ENCODE measurements at regions of chr13 and their contacts with region 1.

Region 1: GRCh38 chr13:48094781-48095502 is at the start of gene MED4:
- DNase-seq: peak; percentile 98
- H3K4me3 Mint-ChIP-seq: peak within 1 kb of the TSS; percentile 97
- H3K27ac Mint-ChIP-seq: peak within 1 kb of the TSS; percentile 86
- H3K4me1 Mint-ChIP-seq: peaks cover 38% of the 10 kb centered on the region
- H3K27me3 Mint-ChIP-seq: peaks cover 1% of the 10 kb centered on the region
- total RNA-seq, gene MED4: 49.3 to 53.0 TPM

Region 2: DNA sequence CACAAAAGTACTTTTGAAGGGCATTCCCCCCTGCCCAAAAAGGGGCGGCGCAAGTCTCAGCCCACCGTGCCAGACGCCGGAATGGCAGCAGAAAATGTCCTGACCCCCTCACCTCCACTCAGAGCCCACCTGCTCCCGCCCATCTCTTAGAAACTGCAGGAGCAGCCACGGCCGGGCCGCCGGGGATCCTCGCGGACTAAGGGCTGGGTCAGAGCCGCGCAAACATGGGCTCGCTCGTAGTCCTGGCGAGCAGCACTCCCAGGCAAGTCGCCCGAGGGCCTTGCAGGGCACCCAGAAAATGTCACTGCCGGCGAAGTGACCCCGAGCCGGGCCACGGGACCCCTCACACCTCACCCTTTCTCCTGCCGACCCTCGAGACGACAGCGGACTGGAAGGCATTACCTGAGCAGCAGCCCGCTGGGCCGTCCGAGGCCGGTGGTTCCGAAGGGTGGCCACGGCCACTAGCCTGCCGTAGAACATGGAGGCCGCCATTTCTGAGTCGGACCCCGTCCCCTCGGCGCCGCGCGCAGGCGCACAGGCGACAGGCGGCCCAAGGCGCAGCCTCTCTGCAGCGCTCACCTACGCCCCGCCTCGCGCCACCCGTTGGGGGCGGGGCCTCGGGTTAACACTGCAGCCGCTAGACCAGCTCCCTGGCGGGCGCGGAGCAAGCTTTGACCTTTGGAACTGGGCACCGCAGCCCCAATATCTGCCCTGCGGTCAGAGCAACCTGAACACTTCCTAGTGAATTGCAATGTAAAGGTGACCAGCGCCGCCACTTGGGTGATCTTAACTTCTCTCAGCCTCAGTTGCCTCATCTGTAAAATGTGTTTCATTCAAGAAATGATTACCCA is 93.9 kb before region 1 on chr13 and contains the start of gene SUCLA2:
- CTCF ChIA-PET with region 1: no interaction called
- POLR2A ChIA-PET with region 1: no interaction called
- intact Hi-C with region 1: loop called (anchors 1 kb)
- DNase-seq: peak; percentile 93
- H3K4me3 Mint-ChIP-seq: peak within 1 kb of the TSS; percentile 93
- H3K27ac Mint-ChIP-seq: peak within 1 kb of the TSS; percentile 69
- H3K4me1 Mint-ChIP-seq: peaks cover 29% of the 10 kb centered on the region
- H3K27me3 Mint-ChIP-seq: no peaks in the 10 kb centered on the region
- total RNA-seq, gene SUCLA2: 39.2 to 41.3 TPM

Region 3: DNA sequence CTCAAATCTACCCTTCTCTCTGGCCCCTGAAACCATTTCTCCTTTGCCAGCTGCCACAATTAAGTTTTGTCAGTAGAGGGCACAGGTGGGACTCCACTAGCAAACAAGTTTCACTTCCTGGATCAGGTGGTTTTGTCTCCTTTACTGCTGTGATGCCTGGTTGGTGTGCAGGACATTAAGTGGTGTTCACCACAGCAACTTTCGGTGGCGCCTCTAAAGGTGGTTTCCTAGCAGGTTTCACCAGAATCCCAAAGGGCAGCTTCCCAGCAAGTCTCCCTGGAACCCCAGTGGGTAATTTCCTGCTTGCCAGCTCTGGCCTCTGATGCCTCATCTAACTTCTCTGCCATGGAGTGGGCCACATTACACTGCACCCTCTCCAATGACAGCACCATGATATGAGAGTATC is 16.7 kb before region 1 on chr13:
- CTCF ChIA-PET with region 1: interaction called, 14 read pairs
- POLR2A ChIA-PET with region 1: interaction called, 5 read pairs
- intact Hi-C with region 1: no loop called
- DNase-seq: peak; percentile 33
- H3K4me3 Mint-ChIP-seq: no peak overlapping the region
- H3K27ac Mint-ChIP-seq: no peak overlapping the region
- H3K4me1 Mint-ChIP-seq: peaks cover 3% of the 10 kb centered on the region
- H3K27me3 Mint-ChIP-seq: no peaks in the 10 kb centered on the region

Region 4: GRCh38 chr13:48303359-48304142 is 208.6 kb after region 1 on chr13 and contains the start of gene RB1:
- CTCF ChIA-PET with region 1: interaction called, 8 read pairs
- POLR2A ChIA-PET with region 1: interaction called, 4 read pairs
- intact Hi-C with region 1: loop called (anchors 1 kb)
- DNase-seq: peak; percentile 94
- H3K4me3 Mint-ChIP-seq: peak within 1 kb of the TSS; percentile 97
- H3K27ac Mint-ChIP-seq: peak within 1 kb of the TSS; percentile 93
- H3K4me1 Mint-ChIP-seq: peaks cover 27% of the 10 kb centered on the region
- H3K27me3 Mint-ChIP-seq: no peaks in the 10 kb centered on the region
- total RNA-seq, gene RB1: 26.5 to 28.8 TPM

Region 5: GRCh38 chr13:48653472-48653939 is 558.6 kb after region 1 on chr13 and contains the start of gene CYSLTR2:
- CTCF ChIA-PET with region 1: no interaction called
- POLR2A ChIA-PET with region 1: no interaction called
- intact Hi-C with region 1: loop called (anchors 5 kb)
- DNase-seq: peak; percentile 16
- H3K4me3 Mint-ChIP-seq: peak within 1 kb of the TSS; percentile 75
- H3K27ac Mint-ChIP-seq: peak within 1 kb of the TSS; percentile 81
- H3K4me1 Mint-ChIP-seq: peaks cover 33% of the 10 kb centered on the region
- H3K27me3 Mint-ChIP-seq: no peaks in the 10 kb centered on the region
- total RNA-seq, gene CYSLTR2: 2.1 to 2.4 TPM

Measured in activated CD4-positive, alpha-beta memory T cell treated with anti-CD3 and anti-CD28 coated beads for 36 hours (primary cell).